ENCODE measurements at regions of chr19 and their contacts with region 1.

Region 1: DNA sequence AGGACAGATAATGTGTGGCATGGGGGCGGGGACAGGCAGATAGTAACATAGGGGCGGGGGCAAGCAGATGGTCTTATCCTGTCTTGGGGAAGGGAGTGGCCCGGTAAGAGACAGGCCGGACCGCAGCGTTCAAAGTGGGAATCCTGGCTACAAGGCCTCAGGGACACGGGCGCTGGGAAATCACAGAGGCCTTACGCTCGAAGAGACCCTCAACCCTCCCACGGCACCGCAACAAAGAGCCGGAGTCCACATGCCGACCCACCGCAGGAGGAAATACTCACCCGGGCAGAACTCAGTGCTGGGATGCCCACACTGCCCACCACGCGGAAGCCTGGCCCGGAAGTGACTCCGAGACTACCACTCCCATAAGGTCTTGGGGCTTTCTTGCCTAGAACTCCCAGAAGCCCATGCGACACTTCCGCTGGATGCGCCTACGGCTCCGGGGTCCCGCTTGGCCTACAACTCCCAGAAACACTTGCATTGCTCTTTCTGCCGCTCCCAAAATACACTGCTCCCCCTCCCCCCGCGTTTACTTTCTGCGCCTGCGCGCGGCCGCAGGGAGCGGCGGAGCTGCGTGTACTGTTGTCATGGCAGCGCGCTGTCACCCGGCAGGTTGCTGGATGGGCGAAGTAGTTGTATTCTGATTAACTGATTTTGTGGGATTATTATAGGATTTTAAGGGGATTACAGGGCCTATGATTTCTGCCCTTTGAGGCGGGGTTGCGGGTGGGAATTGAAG is at the start of gene CTU1:
- DNase-seq: peak; percentile 98 to 99 (median 99)
- ATAC-seq: peak; percentile 99
- H3K4me3 ChIP-seq: peak within 1 kb of the TSS; percentile 56 to 89
- H3K27ac ChIP-seq: peak within 1 kb of the TSS in 3 of 4 donors; percentile 32 to 62 (median 61)
- H3K4me1 ChIP-seq: peaks cover 20% of the 10 kb centered on the region
- H3K27me3 ChIP-seq: no peaks in the 10 kb centered on the region
- CTCF ChIP-seq: peak in 3 of 7 experiments; percentile 23 to 67 (median 24)
- POLR2A ChIP-seq: peak in 2 of 3 donors; percentile 63 to 66
- total RNA-seq, gene CTU1: 6.0 to 32.3 TPM

Region 2: GRCh38 chr19:50511068-50511822 is 597.0 kb before region 1 on chr19 and contains the start of gene JOSD2:
- intact Hi-C with region 1: loop called (anchors 10 kb)
- DNase-seq: peak; percentile 96 to 99 (median 98)
- ATAC-seq: peak; percentile 95
- H3K4me3 ChIP-seq: peak within 1 kb of the TSS; percentile 41 to 87
- H3K27ac ChIP-seq: peak within 1 kb of the TSS in 3 of 4 donors; percentile 34 to 56 (median 53)
- H3K4me1 ChIP-seq: peaks cover 9% of the 10 kb centered on the region
- H3K27me3 ChIP-seq: no peaks in the 10 kb centered on the region
- CTCF ChIP-seq: peak in 3 of 7 experiments; percentile 6 to 27 (median 12)
- POLR2A ChIP-seq: peak; percentile 5 to 63 (median 60)
- total RNA-seq, gene JOSD2: 5.6 to 7.5 TPM

Region 3: GRCh38 chr19:50804420-50805272 is 303.6 kb before region 1 on chr19:
- intact Hi-C with region 1: loop called (anchors 10 kb)
- DNase-seq: peak; percentile 99
- ATAC-seq: peak; percentile 99
- H3K4me3 ChIP-seq: peak overlapping the region; percentile 92 to 96
- H3K27ac ChIP-seq: peak overlapping the region; percentile 91 to 98 (median 96)
- H3K4me1 ChIP-seq: peaks cover 27% of the 10 kb centered on the region
- H3K27me3 ChIP-seq: no peaks in the 10 kb centered on the region
- CTCF ChIP-seq: peak in 1 of 7 experiments; percentile 8
- POLR2A ChIP-seq: peak; percentile 39 to 88 (median 81)

Measured in body of pancreas (tissue), 4 donors.